Sigmoid colon (tissue), 7 donors: ENCODE measurements at regions of chr20 and their contacts with region 1.

Region 1: DNA sequence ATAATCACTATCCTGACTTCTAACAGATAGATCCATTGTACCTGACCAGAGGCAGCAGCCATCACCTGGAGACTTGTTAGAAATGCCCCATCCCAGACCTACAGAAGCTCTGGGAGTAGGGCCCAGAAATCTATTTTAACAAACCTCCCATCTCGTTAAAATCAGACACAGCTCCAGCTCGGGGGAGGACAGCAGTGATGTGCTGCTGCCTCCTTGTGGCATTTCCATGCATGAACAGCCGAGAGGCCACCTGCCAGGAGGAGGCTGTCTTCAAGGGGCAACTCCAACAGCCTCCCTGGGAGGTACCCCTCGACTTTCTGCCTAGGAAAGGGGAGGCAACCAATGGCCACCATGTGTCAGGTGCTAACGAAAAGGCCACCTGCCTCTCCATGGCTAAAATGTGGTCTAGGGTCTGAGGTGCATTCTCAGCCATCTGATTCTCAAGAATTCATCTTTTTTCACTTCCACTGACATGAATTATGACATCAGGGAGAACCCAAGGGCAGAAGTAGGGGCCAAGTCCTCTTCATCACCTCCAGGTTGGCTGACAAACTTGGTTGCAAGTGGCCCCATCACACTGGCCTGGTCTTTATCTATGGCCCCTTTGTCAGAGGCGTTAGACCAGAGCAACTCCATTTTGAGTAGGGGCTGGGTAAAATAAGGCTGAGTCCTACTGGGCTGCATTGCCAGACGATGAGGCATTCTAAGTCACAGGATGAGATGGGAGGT is 12.2 kb upstream of the KCNK15 start:
- DNase-seq: peak; percentile 86
- H3K4me3 ChIP-seq: no peak overlapping the region
- H3K27ac ChIP-seq: no peak overlapping the region
- H3K4me1 ChIP-seq: peaks cover 0 to 39% (median 23%) of the 10 kb centered on the region in 4 donors
- H3K27me3 ChIP-seq: no peaks in the 10 kb centered on the region
- CTCF ChIP-seq: peak; percentile 87 to 91 (median 87)
- EP300 ChIP-seq: no peak
- POLR2A ChIP-seq: no peak

Region 2: GRCh38 chr20:44532259-44532980 is 201.1 kb before region 1 on chr20:
- intact Hi-C with region 1: loop called (anchors 10 kb)
- DNase-seq: no peak
- H3K4me3 ChIP-seq: peak overlapping the region; percentile 56 to 97 (median 78)
- H3K27ac ChIP-seq: peak overlapping the region; percentile 76 to 92 (median 84)
- H3K4me1 ChIP-seq: peaks cover 0 to 49% (median 35%) of the 10 kb centered on the region in 4 donors
- H3K27me3 ChIP-seq: no peaks in the 10 kb centered on the region
- CTCF ChIP-seq: no peak
- EP300 ChIP-seq: no peak
- POLR2A ChIP-seq: no peak

Region 3: DNA sequence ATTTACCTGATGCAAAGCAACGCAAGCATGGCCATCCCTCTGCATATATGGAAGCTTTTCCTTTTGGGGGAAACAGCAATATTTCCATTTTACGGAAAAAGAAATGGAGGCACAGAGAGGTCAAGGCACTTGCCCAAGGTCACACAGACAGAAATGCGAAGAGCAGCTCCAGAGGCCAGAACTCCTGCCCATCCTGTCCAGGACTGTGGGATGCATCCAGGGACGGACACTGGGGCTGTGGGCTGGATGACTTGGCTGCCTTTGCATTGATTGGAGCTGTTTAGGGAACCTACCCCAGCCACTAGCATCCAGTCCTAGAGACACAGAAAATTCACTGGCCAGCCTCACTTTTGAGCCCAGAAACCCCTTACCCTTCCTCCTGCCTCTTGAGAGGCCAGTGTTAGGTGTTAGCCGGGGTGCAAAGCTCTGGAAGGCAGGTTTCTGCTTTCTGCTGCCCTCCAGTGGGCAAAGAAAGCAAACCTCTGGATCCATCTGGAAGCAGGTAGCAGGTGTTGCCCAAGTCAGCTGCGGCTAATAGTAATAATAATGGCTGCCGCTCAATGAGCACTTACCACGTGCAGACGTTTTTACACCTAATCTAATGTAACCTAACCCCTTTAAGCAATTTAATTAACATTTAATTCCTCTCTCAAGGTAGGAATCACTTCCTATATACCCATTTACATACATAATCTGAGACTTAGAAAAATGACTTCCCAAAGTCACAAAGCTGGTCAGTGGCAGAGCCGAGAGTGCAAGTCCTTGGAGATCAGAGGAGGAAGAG is 50.0 kb before region 1 on chr20:
- intact Hi-C with region 1: loop called (anchors 1 kb)
- DNase-seq: no peak
- H3K4me3 ChIP-seq: no peak overlapping the region
- H3K27ac ChIP-seq: no peak overlapping the region
- H3K4me1 ChIP-seq: peaks cover 0 to 9% (median 0%) of the 10 kb centered on the region in 4 donors
- H3K27me3 ChIP-seq: no peaks in the 10 kb centered on the region
- CTCF ChIP-seq: peak in 2 of 4 experiments; percentile 42 to 57
- EP300 ChIP-seq: no peak
- POLR2A ChIP-seq: no peak